ENCODE measurements at regions of chr5 and their contacts with region 1.

Region 1: DNA sequence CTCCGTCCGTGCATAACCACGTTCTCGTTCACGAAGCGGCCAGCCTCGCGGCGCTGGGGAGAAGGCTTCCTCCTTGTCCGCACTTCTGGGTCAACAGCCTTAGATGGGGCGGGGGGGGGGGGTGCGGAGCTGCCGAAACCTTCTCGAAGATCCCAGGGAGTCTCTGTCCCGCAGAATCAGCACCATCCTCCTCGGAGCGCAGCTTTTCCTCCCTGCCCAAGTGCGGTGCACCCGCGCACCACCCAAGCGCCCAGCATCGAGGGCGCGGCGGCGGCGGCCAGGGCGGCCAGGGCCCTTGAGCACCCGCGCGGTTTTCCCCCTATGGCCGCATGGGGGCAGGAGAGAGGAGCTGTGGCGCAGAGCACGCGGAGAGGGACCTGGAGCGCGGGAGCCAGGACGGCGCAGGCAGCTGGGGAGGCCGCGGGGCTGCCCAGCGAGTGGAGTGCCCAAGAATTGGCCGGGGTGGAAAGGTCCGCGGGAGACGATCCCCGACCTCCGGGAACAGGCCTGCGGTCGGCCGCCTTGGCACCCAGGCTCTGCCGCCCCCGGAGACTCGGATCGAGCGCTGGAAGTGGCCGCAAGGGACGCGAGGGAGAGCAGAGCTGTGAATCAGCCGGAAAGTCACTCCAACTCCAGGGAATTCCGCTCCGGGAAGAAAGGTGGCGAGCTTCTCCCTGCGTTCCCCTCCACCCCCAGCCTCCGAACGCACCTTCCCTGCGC is 43.1 kb downstream of the TMEM174 start:
- DNase-seq: peak; percentile 58 to 85
- H3K4me3 ChIP-seq: peak overlapping the region; percentile 79
- H3K27ac ChIP-seq: peak overlapping the region; percentile 64
- H3K4me1 ChIP-seq: 0 out of 2 replicates have a peak, but pooled peaks cover 4% of the 10 kb centered on the region
- H3K27me3 ChIP-seq: no peaks in the 10 kb centered on the region
- CTCF ChIP-seq: peak; percentile 89

Region 2: DNA sequence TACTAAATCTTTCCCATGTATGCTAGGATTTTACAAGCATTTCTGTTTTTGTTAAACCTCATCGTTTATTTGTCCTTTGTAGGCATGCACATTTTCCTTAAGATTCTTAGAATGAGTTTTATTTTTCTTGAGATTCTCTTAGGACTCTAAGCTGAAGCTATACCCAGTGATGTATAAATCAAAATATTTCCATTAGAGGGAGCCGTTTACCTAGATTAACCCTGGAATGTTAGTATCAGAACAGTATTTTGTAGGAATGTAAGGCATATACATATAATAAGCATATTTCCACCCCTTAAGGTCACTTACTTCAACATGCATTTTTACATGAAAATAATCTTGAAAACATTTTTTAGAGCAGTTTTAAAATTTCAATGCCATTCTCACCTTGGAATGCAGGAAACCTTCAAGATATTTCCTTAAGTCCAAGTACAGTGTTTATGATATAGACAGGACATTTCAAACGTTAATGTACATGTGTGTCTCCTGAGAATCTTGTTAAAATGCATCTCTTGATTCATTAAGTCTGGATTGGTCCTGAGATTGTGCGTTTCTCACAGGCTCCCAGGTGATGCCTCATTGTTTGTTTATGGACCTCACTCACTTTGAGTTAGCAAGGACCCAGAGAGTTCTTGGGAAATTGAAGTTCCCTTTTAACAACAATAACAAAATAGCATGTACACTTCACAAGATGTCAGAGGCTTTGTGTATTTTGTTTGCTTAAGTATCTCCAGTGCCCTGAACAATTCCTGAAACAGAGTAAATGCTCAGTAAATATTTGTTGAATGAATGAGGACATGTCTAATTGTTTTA is 295.2 kb before region 1 on chr5:
- CTCF ChIA-PET with region 1: no interaction called
- POLR2A ChIA-PET with region 1: no interaction called
- intact Hi-C with region 1: loop called (anchors 2 kb)
- DNase-seq: peak in 1 of 2 experiments; percentile 52
- H3K4me3 ChIP-seq: no peak overlapping the region
- H3K27ac ChIP-seq: no peak overlapping the region
- H3K4me1 ChIP-seq: no peaks in the 10 kb centered on the region
- H3K27me3 ChIP-seq: no peaks in the 10 kb centered on the region
- CTCF ChIP-seq: peak; percentile 69

Region 3: DNA sequence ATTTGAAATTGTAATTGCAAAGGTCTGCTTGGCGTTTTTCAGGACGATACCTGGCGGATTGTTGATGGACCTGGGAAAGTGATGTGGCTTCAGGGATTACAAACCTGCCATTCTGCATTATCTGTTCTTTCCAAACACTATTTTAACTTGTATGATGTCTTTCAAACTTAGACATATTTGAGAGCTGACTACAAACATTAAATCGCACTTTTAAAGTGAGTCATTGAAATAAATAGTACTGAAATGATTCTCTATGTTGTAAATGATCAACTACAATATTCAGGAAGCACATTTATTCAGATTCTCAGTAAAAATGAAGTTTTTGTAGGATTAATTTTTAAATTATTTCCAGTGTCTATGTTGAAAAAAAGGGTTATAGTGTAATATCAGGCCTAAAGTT is 128.0 kb before region 1 on chr5:
- CTCF ChIA-PET with region 1: interaction called, 3 read pairs
- POLR2A ChIA-PET with region 1: no interaction called
- intact Hi-C with region 1: loop called (anchors 1 kb)
- DNase-seq: no peak
- H3K4me3 ChIP-seq: no peak overlapping the region
- H3K27ac ChIP-seq: no peak overlapping the region
- H3K4me1 ChIP-seq: 0 out of 2 replicates have a peak, but pooled peaks cover 1% of the 10 kb centered on the region
- H3K27me3 ChIP-seq: no peaks in the 10 kb centered on the region
- CTCF ChIP-seq: no peak

Region 4: GRCh38 chr5:73189871-73190376 is 26.1 kb before region 1 on chr5:
- CTCF ChIA-PET with region 1: no interaction called
- POLR2A ChIA-PET with region 1: interaction called, 11 read pairs
- intact Hi-C with region 1: no loop called
- DNase-seq: no peak
- H3K4me3 ChIP-seq: no peak overlapping the region
- H3K27ac ChIP-seq: no peak overlapping the region
- H3K4me1 ChIP-seq: no peaks in the 10 kb centered on the region
- H3K27me3 ChIP-seq: no peaks in the 10 kb centered on the region
- CTCF ChIP-seq: no peak

Region 5: GRCh38 chr5:73303148-73304079 is 87.4 kb after region 1 on chr5:
- CTCF ChIA-PET with region 1: interaction called, 10 read pairs
- POLR2A ChIA-PET with region 1: no interaction called
- intact Hi-C with region 1: loop called (anchors 2 kb)
- DNase-seq: peak in 1 of 2 experiments; percentile 62
- H3K4me3 ChIP-seq: peak overlapping the region; percentile 52; the same call in 1 of the 2 replicates
- H3K27ac ChIP-seq: no peak overlapping the region
- H3K4me1 ChIP-seq: no peaks in the 10 kb centered on the region
- H3K27me3 ChIP-seq: no peaks in the 10 kb centered on the region
- CTCF ChIP-seq: peak; percentile 45; the same call in 1 of the 2 replicates

Region 6: DNA sequence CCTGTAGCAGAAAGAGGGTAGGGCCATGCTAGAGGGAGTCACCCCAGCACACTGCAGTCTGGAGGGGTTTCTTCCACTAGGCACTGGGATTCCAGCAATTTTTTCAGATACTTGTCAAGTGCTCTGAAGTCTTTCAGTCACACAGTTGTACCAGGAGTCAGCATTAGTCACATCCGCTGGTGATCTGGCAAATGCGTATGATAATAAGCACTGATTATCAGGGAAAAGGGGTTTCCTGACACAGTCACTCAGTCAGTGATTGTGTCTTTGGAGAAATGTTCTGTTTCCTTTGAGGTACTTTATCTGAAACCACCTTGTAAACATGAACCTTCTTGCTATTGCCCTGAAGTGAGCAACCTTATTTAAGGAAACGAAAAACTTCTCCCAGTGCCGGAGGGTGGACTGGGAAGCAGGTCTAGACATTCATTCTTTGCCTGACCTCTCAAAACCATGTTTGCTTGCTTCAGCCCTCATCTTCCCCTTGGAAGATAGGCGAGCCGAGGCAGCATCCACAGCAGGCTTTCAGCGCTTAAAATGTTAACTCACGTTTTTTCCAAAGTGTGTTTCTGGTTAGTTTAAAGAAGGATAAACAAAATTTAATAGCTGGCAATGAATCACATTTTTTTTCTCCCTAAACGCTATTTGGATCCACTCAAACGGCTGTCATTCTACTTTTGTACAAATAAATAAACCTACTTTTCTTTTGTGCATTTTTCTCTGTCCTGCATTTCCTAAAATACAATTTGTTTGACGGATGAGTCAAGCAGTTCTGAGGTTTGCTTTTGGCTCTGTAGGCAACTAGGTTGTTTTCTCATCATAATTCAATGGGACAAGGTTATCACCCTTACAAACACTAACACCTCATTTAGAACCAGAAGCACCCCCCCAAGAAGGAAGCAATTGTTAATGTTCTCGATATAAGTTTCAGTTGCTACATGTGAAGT is 154.9 kb after region 1 on chr5:
- CTCF ChIA-PET with region 1: interaction called, 8 read pairs
- POLR2A ChIA-PET with region 1: no interaction called
- intact Hi-C with region 1: loop called (anchors 5 kb)
- DNase-seq: peak; percentile 58 to 98
- H3K4me3 ChIP-seq: peak overlapping the region; percentile 30; the same call in 1 of the 2 replicates
- H3K27ac ChIP-seq: peak overlapping the region; percentile 94
- H3K4me1 ChIP-seq: peaks cover 71% of the 10 kb centered on the region
- H3K27me3 ChIP-seq: no peaks in the 10 kb centered on the region
- CTCF ChIP-seq: no peak

Region 7: GRCh38 chr5:73498057-73499008 is 282.3 kb after region 1 on chr5 and contains the start of gene BTF3:
- CTCF ChIA-PET with region 1: interaction called, 6 read pairs
- POLR2A ChIA-PET with region 1: interaction called, 4 read pairs
- intact Hi-C with region 1: loop called (anchors 5 kb)
- DNase-seq: peak; percentile 93 to 97
- H3K4me3 ChIP-seq: peak within 1 kb of the TSS; percentile 91
- H3K27ac ChIP-seq: peak within 1 kb of the TSS; percentile 82
- H3K4me1 ChIP-seq: peaks cover 38% of the 10 kb centered on the region
- H3K27me3 ChIP-seq: no peaks in the 10 kb centered on the region
- CTCF ChIP-seq: no peak
- total RNA-seq, gene BTF3: 635 and 694 TPM in 2 replicates

Measured in PC-9 (cell line).